Mammary epithelial cell (primary cell): ENCODE measurements at regions of chr10 and their contacts with region 1.

Region 1: DNA sequence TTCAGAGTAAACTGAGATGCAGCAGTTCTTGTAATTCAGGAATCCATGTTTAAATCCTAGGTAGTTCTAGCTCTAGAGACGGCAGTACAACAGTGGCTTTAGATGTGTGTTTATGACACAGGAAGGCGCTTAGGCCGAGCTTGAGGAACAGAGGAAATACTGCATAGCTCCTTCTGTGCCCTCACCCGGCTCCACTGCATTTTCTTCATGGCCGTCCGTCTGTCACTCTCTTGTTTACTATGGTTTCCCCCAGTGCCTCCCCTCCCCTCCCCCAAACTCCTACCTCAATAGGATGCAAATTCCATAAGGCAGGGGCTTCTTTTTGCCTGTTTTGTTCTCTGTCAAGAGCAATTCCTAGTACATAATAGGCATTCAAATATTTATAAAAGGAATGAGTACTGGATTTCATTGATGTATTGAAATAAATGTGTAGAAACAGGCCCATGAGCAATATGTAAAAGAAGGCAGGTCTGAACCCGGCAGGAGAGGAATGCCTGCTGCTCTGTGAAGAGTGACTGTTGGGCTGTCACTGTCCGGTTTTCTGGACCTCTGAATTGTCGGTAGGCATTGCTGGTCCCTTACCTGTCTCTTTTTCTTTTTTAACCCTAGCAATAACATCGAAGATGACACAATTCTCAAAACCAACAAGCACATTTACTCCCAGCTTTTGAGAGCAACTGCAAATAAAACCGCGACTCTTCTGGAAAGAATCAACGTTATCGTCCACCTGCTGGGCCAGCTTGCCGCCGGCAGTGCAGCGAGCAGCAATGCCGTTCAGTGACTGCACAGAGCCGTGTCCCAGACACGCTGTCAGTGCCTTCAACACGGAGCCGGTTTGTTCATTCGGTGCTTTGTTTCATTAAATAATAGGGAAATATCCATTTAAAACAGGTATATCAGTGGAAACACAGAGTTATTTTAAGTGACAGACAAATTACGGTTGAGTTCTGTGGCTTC is 12.7 kb downstream of the MMP21 start:
- DNase-seq: no peak
- H3K4me3 ChIP-seq: no peak overlapping the region
- H3K27ac ChIP-seq: no peak overlapping the region
- H3K4me1 ChIP-seq: no peaks in the 10 kb centered on the region
- H3K27me3 ChIP-seq: no peaks in the 10 kb centered on the region
- CTCF ChIP-seq: no peak

Region 2: GRCh38 chr10:125799451-125800182 is 36.6 kb after region 1 on chr10:
- CTCF ChIA-PET with region 1: no interaction called
- dilution Hi-C with region 1: loop called (anchors 5 kb)
- in situ Hi-C with region 1: no loop called
- intact Hi-C with region 1: no loop called
- DNase-seq: no peak
- H3K4me3 ChIP-seq: no peak overlapping the region
- H3K27ac ChIP-seq: no peak overlapping the region
- H3K4me1 ChIP-seq: peaks cover 16% of the 10 kb centered on the region
- H3K27me3 ChIP-seq: no peaks in the 10 kb centered on the region
- CTCF ChIP-seq: no peak

Region 3: DNA sequence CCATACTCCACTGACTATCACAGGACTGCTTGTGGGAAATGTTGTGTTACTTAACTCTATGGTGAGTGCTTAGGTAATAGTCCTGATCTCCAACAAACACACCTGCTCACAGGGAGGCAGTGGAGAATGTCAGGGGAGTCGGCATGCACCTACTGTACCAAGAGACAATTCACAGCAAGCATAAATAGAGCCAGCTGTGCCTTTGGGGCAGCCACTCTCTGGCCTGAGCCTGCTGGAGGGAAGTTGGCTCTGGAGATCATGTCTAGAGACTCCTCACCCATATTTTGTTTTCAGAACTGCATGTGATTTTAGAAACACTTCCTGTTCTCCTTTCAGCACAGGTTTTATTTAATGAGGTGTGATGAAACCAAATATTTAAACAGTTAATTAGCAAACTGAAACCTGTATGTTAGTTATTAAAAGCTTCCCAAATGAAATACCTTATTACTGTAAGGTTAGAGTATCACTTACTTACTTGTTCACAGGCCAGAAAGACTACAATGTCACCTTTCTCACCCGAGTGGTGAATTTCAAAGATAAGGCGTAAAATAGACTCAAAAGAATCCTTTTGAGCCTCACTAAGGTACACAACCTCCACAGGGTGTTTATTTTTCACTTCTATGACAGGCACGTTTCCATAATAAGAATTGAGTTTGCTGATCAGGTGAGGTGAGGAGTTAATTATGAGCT is 96.3 kb after region 1 on chr10:
- CTCF ChIA-PET with region 1: no interaction called
- dilution Hi-C with region 1: loop called (anchors 5 kb)
- in situ Hi-C with region 1: no loop called
- intact Hi-C with region 1: no loop called
- DNase-seq: no peak
- H3K4me3 ChIP-seq: no peak overlapping the region
- H3K27ac ChIP-seq: no peak overlapping the region
- H3K4me1 ChIP-seq: no peaks in the 10 kb centered on the region
- H3K27me3 ChIP-seq: no peaks in the 10 kb centered on the region
- CTCF ChIP-seq: no peak